K562 (cell line): ENCODE measurements at regions of chr2 and their contacts with region 1.

Region 1: DNA sequence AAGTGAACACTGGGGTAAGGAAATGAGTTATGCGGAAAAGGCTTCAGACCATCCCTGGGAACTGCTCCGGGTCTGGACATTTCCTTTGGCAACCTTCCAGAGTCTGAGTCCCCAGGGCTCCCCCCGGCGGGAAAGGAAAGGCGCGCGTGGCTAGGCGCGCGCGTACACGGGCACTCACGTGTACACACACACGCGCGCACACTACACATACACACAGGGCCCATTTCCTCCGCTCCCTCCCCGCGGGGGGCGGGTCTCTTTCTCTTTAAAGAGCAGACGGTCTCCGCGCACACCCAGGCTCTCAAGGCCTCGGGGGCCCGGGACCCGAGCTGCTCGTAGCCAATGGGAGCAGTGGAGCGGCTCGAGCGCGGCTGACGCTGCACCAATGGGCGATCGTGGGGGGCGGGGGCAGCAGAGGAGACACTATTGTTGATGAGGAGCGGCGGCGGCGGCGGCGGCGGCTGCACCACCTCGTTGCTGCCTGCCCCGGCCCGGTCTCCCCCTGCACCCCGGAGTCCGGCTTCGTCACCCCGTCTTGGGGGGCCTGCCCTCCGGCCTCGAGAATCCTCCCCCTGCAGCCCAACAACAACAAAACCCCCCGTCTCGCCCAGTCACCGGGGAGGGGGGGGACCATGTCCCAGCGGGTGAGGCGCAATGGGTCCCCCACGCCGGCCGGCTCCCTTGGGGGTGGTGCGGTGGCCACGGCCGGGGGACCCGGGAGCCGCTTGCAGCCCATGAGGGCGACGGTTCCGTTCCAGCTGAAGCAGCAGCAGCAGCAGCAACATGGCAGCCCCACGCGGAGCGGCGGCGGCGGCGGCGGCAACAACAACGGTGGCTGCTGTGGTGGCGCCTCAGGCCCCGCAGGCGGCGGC is at the start of gene FAM117B:
- DNase-seq: peak; percentile 90 to 95 (median 92)
- ATAC-seq: peak; percentile 96
- H3K4me3 ChIP-seq: peak within 1 kb of the TSS; percentile 95
- H3K27ac ChIP-seq: peak within 1 kb of the TSS; percentile 77
- H3K4me1 ChIP-seq: peaks cover 8 to 10% of the 10 kb centered on the region in 2 experiments; a peak in 4 of 5 replicates
- H3K27me3 ChIP-seq: no peaks in the 10 kb centered on the region
- CTCF ChIP-seq: no peak
- EP300 ChIP-seq: no peak
- POLR2A ChIP-seq: peak; percentile 82
- RAD21 ChIP-seq: no peak
- polyA plus RNA-seq, gene FAM117B: 2.6 to 3.7 TPM

Region 2: GRCh38 chr2:202750763-202751427 is 116.1 kb after region 1 on chr2:
- CTCF ChIA-PET with region 1: no interaction called
- POLR2A ChIA-PET with region 1: no interaction called
- in situ Hi-C with region 1: no loop called
- intact Hi-C with region 1: loop called (anchors 10 kb)
- DNase-seq: no peak
- ATAC-seq: no peak
- H3K4me3 ChIP-seq: no peak overlapping the region
- H3K27ac ChIP-seq: no peak overlapping the region
- H3K4me1 ChIP-seq: no peaks in the 10 kb centered on the region
- H3K27me3 ChIP-seq: no peaks in the 10 kb centered on the region
- CTCF ChIP-seq: no peak
- EP300 ChIP-seq: no peak
- POLR2A ChIP-seq: no peak
- RAD21 ChIP-seq: no peak